Pancreas (tissue), 10 donors: ENCODE measurements at regions of chr11 and their contacts with region 1.

Region 1: DNA sequence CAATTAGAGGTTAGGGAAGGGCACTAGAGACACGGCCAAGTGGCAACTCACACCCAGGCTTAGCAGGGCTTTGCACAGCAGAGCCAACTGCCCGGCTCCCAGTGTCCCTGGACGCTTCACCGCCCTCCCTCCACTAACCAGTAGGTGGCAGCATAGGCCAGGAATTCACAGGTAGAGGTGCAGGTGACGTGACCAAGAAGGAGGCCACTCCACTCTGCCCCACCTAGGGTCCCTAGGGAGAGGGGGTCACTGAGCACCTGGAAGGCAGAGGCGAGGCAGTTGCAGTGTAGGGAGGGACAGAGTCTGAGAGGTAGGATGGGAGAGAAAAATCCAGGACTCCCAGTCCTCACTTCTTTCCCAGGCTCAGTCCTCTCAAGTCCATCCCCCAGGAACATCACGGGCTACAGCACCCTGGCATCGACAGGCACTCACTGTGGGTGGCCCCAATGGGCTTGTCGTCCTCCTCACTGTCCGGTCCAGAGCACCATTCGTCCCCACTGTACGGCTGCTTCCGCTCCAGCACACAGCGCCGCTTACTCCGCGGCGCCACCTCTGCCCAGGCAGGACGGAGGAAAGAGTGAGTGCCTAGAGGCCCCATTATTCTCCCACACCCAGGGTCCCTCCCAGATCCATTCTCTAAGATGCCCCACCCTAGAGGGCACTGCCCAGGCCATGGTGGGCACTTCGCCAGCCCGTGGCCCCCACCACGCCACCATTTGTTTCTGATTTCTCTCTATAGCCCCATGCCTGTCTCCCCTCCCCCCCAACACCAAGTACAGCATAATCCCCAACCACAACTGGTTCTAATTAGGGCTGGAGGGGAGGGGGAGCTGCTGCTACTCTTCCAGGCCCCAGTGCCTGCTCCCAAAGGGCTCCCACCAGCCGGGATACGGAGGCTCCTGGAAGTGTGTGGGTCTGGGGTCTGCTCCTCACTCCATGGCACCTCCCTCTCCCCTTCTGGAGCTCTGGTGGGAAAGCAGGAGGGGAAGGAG is 18.4 kb downstream of the BCL9L start:
- DNase-seq: peak; percentile 80 to 94 (median 90)
- ATAC-seq: peak; percentile 62 to 78 (median 76)
- H3K4me3 ChIP-seq: no peak overlapping the region
- H3K27ac ChIP-seq: peak overlapping the region in 2 of 4 donors; percentile 23 to 52
- H3K4me1 ChIP-seq: peaks cover 17 to 38% (median 22%) of the 10 kb centered on the region in 3 donors
- H3K27me3 ChIP-seq: no peaks in the 10 kb centered on the region
- CTCF ChIP-seq: peak; percentile 78 to 95 (median 88)

Region 2: GRCh38 chr11:118924591-118925585 is 17.5 kb after region 1 on chr11:
- intact Hi-C with region 1: loop called in 1 of 3 experiments (anchors 2 kb)
- DNase-seq: peak; percentile 62 to 88 (median 72)
- ATAC-seq: no peak
- H3K4me3 ChIP-seq: peak overlapping the region; percentile 46 to 88 (median 77)
- H3K27ac ChIP-seq: peak overlapping the region; percentile 66 to 95 (median 92)
- H3K4me1 ChIP-seq: peaks cover 15 to 37% (median 23%) of the 10 kb centered on the region in 3 donors
- H3K27me3 ChIP-seq: no peaks in the 10 kb centered on the region
- CTCF ChIP-seq: no peak

Region 3: GRCh38 chr11:118956094-118956846 is 48.9 kb after region 1 on chr11 and contains the start of gene UPK2:
- intact Hi-C with region 1: loop called in 1 of 3 experiments (anchors 5 kb)
- DNase-seq: peak; percentile 83 to 96 (median 94)
- ATAC-seq: peak; percentile 98 to 100 (median 99)
- H3K4me3 ChIP-seq: no peak within 1 kb of the TSS
- H3K27ac ChIP-seq: no peak within 1 kb of the TSS
- H3K4me1 ChIP-seq: no peaks in the 10 kb centered on the region
- H3K27me3 ChIP-seq: no peaks in the 10 kb centered on the region
- CTCF ChIP-seq: peak; percentile 93 to 97 (median 94)
- total RNA-seq, gene UPK2: 0.16 TPM in 1 of 6 donors, not detected in the others

Region 4: DNA sequence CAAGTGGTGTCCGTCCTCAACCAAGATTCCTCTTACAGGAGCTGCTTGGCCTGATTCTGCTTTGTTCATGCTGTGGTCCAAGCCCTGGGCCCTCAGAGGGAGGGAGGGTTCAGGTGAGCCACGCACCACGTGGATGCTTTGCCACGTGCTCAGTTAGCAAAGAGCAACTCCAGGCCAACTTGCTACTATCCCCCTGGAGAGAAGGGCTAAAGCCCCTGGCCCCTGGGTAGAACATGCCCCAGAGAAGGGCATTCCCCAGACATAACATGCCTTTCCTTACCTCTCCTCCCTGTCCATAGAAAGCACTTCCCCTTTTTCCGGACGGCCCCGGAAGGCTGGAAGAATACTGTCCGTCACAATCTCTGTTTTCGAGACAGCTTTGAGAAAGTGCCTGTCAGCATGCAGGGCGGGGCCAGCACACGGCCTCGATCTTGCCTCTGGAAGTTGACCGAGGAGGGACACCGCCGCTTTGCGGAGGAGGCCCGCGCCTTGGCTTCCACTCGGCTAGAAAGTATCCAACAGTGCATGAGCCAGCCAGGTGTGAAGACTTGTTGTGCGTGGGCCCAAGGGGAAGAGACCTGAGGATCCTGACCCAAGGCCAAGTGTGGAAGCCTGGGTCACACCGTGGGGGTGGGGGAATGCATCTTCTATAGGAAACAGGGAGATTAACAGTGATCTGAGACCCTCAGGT is 73.0 kb after region 1 on chr11:
- intact Hi-C with region 1: no loop called
- DNase-seq: no peak
- ATAC-seq: peak in 3 of 4 donors; percentile 25 to 65 (median 65)
- H3K4me3 ChIP-seq: no peak overlapping the region
- H3K27ac ChIP-seq: no peak overlapping the region
- H3K4me1 ChIP-seq: no peaks in the 10 kb centered on the region
- H3K27me3 ChIP-seq: no peaks in the 10 kb centered on the region
- CTCF ChIP-seq: no peak

Region 5: DNA sequence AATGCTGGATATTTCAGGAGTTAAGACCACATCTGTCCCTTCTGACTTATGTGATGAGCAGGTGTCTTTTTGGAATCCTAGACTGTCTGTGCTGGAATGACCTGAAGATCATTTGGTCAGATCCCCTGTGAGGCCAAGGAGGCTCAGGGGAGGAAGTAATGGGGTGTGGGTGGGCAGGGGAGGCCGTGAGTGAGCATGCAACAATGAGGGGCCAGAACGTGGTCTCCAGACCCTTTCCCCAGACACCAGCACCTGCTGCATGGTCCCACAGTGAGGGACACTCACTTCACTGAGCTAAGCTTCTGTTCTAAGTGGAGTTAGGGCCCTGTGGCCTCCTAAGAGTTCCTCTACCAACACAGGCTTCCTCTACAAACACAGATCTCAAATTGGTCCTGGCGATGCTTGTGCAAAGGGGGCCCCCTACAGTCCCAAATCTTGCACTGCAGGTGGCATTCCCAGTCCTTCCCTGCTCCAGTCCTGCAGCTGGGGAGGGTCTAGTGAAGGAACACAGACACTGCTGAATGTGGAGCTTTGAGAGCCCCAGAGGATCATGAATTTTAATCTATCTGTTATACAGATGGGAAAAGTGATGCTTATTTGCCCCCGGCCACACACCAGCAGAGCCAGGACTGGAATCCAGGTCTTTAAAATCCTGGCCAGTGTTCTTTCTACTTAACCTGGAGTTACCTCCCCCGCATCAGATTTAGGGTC is 466.7 kb after region 1 on chr11:
- intact Hi-C with region 1: no loop called
- DNase-seq: peak; percentile 67 to 90 (median 86)
- ATAC-seq: peak; percentile 39 to 76 (median 68)
- H3K4me3 ChIP-seq: no peak overlapping the region
- H3K27ac ChIP-seq: no peak overlapping the region
- H3K4me1 ChIP-seq: peaks cover 9 to 30% (median 21%) of the 10 kb centered on the region in 3 donors
- H3K27me3 ChIP-seq: no peaks in the 10 kb centered on the region
- CTCF ChIP-seq: peak; percentile 90 to 94 (median 92)